ENCODE measurements at regions of chr9 and their contacts with region 1.

Region 1: GRCh38 chr9:15205632-15206420 is 101.2 kb downstream of the TTC39B start:
- DNase-seq: no peak
- H3K4me3 Mint-ChIP-seq: no peak overlapping the region
- H3K27ac Mint-ChIP-seq: no peak overlapping the region
- H3K4me1 Mint-ChIP-seq: peaks cover 12% of the 10 kb centered on the region
- H3K27me3 Mint-ChIP-seq: no peaks in the 10 kb centered on the region

Region 2: DNA sequence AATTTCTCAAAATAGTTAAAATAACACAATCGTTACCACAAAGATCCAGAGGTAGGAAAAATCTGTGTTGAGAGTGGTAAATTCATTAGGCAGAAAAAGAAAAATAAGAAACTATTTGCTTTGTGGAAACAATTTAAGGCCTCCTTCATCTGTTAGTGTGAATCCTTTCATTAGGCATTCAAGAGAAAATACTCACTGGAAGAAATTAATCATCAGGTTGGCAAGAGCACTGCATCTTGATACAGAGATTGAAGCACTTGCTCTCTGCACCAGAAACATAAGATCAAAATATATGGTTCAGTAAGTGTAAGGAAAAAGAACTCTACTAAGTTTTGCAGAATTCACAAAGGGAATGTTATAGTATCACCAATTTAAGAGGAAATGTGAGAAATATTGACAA is 56.8 kb after region 1 on chr9:
- CTCF ChIA-PET with region 1: interaction called, 3 read pairs
- intact Hi-C with region 1: loop called (anchors 5 kb)
- DNase-seq: no peak
- H3K4me3 Mint-ChIP-seq: no peak overlapping the region
- H3K27ac Mint-ChIP-seq: no peak overlapping the region
- H3K4me1 Mint-ChIP-seq: peaks cover 18% of the 10 kb centered on the region
- H3K27me3 Mint-ChIP-seq: no peaks in the 10 kb centered on the region

Region 3: GRCh38 chr9:15329539-15330109 is 123.8 kb after region 1 on chr9:
- CTCF ChIA-PET with region 1: no interaction called
- intact Hi-C with region 1: no loop called
- DNase-seq: no peak
- H3K4me3 Mint-ChIP-seq: no peak overlapping the region
- H3K27ac Mint-ChIP-seq: no peak overlapping the region
- H3K4me1 Mint-ChIP-seq: no peaks in the 10 kb centered on the region
- H3K27me3 Mint-ChIP-seq: no peaks in the 10 kb centered on the region

Measured in activated naive CD4-positive, alpha-beta T cell treated with anti-CD3 and anti-CD28 coated beads for 36 hours (primary cell).